Activated CD4-positive, alpha-beta T cell treated with anti-CD3 and anti-CD28 coated beads, Interleukin-2, amount 10 ng/mL, durations not matched to agents 24 days and 14 days (primary cell): ENCODE measurements at regions of chr10 and their contacts with region 1.

Region 1: GRCh38 chr10:17216217-17216900 is 11.7 kb upstream of the VIM start:
- DNase-seq: peak; percentile 86
- H3K4me3 Mint-ChIP-seq: peak overlapping the region; percentile 8
- H3K27ac Mint-ChIP-seq: peak overlapping the region; percentile 88
- H3K4me1 Mint-ChIP-seq: peaks cover 32% of the 10 kb centered on the region
- H3K27me3 Mint-ChIP-seq: no peaks in the 10 kb centered on the region

Region 2: GRCh38 chr10:17206210-17206709 is 10.1 kb before region 1 on chr10:
- intact Hi-C with region 1: loop called (anchors 1 kb)
- DNase-seq: peak; percentile 79
- H3K4me3 Mint-ChIP-seq: peak overlapping the region; percentile 63
- H3K27ac Mint-ChIP-seq: peak overlapping the region; percentile 83
- H3K4me1 Mint-ChIP-seq: peaks cover 31% of the 10 kb centered on the region
- H3K27me3 Mint-ChIP-seq: no peaks in the 10 kb centered on the region